Heart right ventricle (tissue), 16 donors: ENCODE measurements at regions of chr9 and their contacts with region 1.

Region 1: GRCh38 chr9:70043689-70044489 is at the start of gene MAMDC2:
- DNase-seq: peak; percentile 59 to 76
- ATAC-seq: peak; percentile 72 to 86 (median 78)
- H3K4me3 ChIP-seq: peak within 1 kb of the TSS; percentile 37 to 68 (median 59)
- H3K27ac ChIP-seq: peak within 1 kb of the TSS; percentile 44 to 82 (median 69)
- H3K4me1 ChIP-seq: peaks cover 11 to 61% (median 28%) of the 10 kb centered on the region in 9 donors
- H3K27me3 ChIP-seq: peaks cover 0 to 37% (median 7%) of the 10 kb centered on the region in 7 donors
- CTCF ChIP-seq: no peak
- total RNA-seq, gene MAMDC2: 2.3 to 11.8 (median 5.0) TPM

Region 2: GRCh38 chr9:69532396-69532795 is 511.5 kb before region 1 on chr9:
- intact Hi-C with region 1: no loop called
- DNase-seq: no peak
- ATAC-seq: no peak
- H3K4me3 ChIP-seq: no peak overlapping the region
- H3K27ac ChIP-seq: no peak overlapping the region
- H3K4me1 ChIP-seq: peaks cover 0 to under 1% (median 0%) of the 10 kb centered on the region in 9 donors
- H3K27me3 ChIP-seq: no peaks in the 10 kb centered on the region
- CTCF ChIP-seq: no peak

Region 3: GRCh38 chr9:69971643-69972449 is 72.0 kb before region 1 on chr9:
- intact Hi-C with region 1: loop called in 2 of 10 experiments (anchors 5 to 10 kb)
- DNase-seq: peak; percentile 63 to 75
- ATAC-seq: peak; percentile 68 to 83 (median 74)
- H3K4me3 ChIP-seq: no peak overlapping the region
- H3K27ac ChIP-seq: no peak overlapping the region
- H3K4me1 ChIP-seq: peaks cover 0 to 13% (median 0%) of the 10 kb centered on the region in 9 donors
- H3K27me3 ChIP-seq: no peaks in the 10 kb centered on the region
- CTCF ChIP-seq: peak; percentile 73 to 91 (median 83)

Region 4: GRCh38 chr9:69996967-69997366 is 46.9 kb before region 1 on chr9:
- intact Hi-C with region 1: loop called in 3 of 10 experiments (anchors 5 to 10 kb)
- DNase-seq: peak in 1 of 2 donors; percentile 9
- ATAC-seq: peak in 7 of 8 donors; percentile 81 to 97 (median 86)
- H3K4me3 ChIP-seq: no peak overlapping the region
- H3K27ac ChIP-seq: peak overlapping the region in 9 of 10 donors; percentile 14 to 68 (median 45)
- H3K4me1 ChIP-seq: peaks cover 0 to 23% (median 6%) of the 10 kb centered on the region in 9 donors
- H3K27me3 ChIP-seq: no peaks in the 10 kb centered on the region
- CTCF ChIP-seq: no peak

Region 5: GRCh38 chr9:70013598-70014196 is 30.2 kb before region 1 on chr9:
- intact Hi-C with region 1: loop called in 1 of 10 experiments (anchors 1 kb)
- DNase-seq: peak in 1 of 2 donors; percentile 10
- ATAC-seq: peak in 4 of 8 donors; percentile 41 to 74 (median 50)
- H3K4me3 ChIP-seq: no peak overlapping the region
- H3K27ac ChIP-seq: no peak overlapping the region
- H3K4me1 ChIP-seq: peaks cover 0 to 9% (median 0%) of the 10 kb centered on the region in 9 donors
- H3K27me3 ChIP-seq: no peaks in the 10 kb centered on the region
- CTCF ChIP-seq: no peak

Region 6: DNA sequence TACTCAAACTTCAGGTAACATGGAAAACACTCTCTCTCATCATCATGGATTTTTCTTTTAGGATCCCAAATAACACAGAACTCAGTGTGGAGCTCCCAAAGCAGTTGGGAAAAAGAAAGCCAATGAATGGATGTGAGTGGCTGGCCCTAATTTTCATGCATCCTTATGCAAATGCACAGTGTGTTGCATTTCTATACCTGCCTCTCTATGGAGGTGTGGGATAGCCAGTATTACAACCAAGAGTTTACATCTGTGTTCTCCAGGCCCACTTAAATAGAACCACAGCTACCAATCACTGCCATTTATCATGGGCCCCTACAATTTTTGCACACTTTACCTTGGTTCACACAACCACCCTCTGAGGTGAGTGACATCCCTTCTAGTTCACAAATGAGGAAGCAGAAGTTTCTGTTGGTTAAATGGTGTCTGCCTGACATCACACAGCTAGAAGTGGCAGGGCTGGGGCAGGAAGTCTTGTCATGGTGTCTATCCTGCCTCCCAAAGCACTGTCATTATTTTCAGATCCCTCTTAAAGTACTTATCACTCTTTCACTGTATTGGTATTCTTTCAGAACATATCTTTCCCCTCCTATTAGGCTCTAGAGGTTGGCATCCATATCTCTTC is 17.1 kb after region 1 on chr9:
- intact Hi-C with region 1: no loop called
- DNase-seq: no peak
- ATAC-seq: no peak
- H3K4me3 ChIP-seq: no peak overlapping the region
- H3K27ac ChIP-seq: no peak overlapping the region
- H3K4me1 ChIP-seq: peaks cover 0 to 39% (median 0%) of the 10 kb centered on the region in 9 donors
- H3K27me3 ChIP-seq: no peaks in the 10 kb centered on the region
- CTCF ChIP-seq: no peak

Region 7: DNA sequence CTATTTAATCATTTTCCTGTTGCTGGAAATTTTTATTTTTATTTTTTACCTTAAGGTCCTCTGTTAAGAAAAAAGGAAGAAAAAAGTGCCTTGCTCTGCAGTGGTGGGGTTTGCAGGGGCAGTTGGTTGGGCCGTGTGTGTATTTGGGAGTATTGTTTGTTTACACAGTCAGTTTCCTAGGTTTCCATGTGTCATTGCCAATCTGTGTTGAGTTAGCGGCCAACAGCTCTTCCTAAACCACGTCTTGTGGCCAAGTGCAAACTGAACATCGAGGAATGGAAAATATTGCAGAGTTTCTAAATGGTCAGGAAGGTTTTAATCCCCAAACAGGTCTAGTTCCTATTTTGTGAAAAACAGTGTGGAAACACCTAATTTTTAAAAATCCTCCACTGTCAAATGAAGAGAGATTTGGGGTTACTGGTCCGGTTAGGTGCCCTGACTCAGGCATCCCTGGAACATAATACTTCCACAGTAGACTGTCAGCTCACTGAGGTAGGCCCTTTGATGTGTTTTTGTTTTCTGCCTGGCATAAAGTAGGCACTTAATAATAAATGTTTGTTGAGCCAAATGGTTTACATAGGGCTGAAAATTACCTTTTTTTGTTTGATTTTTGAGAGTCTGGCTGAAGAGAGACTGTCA is 36.7 kb after region 1 on chr9:
- intact Hi-C with region 1: loop called in 1 of 10 experiments (anchors 5 kb)
- DNase-seq: peak; percentile 23 to 69
- ATAC-seq: peak; percentile 91 to 95 (median 94)
- H3K4me3 ChIP-seq: no peak overlapping the region
- H3K27ac ChIP-seq: peak overlapping the region in 8 of 10 donors; percentile 8 to 77 (median 70)
- H3K4me1 ChIP-seq: peaks cover 0 to 52% (median 30%) of the 10 kb centered on the region in 9 donors
- H3K27me3 ChIP-seq: no peaks in the 10 kb centered on the region
- CTCF ChIP-seq: no peak

Region 8: GRCh38 chr9:70100362-70100761 is 56.5 kb after region 1 on chr9:
- intact Hi-C with region 1: loop called in 1 of 10 experiments (anchors 10 kb)
- DNase-seq: no peak
- ATAC-seq: peak in 4 of 8 donors; percentile 27 to 67 (median 56)
- H3K4me3 ChIP-seq: no peak overlapping the region
- H3K27ac ChIP-seq: no peak overlapping the region
- H3K4me1 ChIP-seq: no peaks in the 10 kb centered on the region
- H3K27me3 ChIP-seq: no peaks in the 10 kb centered on the region
- CTCF ChIP-seq: no peak

Region 9: GRCh38 chr9:70111042-70111602 is 67.2 kb after region 1 on chr9:
- intact Hi-C with region 1: loop called in 2 of 10 experiments (anchors 5 to 10 kb)
- DNase-seq: peak; percentile 79 to 86
- ATAC-seq: peak in 7 of 8 donors; percentile 74 to 87 (median 81)
- H3K4me3 ChIP-seq: no peak overlapping the region
- H3K27ac ChIP-seq: peak overlapping the region in 5 of 10 donors; percentile 1 to 54 (median 13)
- H3K4me1 ChIP-seq: peaks cover 0 to 19% (median 8%) of the 10 kb centered on the region in 9 donors
- H3K27me3 ChIP-seq: no peaks in the 10 kb centered on the region
- CTCF ChIP-seq: peak; percentile 64 to 93 (median 86)